ENCODE measurements at regions of chr12 and their contacts with region 1.

Region 1: DNA sequence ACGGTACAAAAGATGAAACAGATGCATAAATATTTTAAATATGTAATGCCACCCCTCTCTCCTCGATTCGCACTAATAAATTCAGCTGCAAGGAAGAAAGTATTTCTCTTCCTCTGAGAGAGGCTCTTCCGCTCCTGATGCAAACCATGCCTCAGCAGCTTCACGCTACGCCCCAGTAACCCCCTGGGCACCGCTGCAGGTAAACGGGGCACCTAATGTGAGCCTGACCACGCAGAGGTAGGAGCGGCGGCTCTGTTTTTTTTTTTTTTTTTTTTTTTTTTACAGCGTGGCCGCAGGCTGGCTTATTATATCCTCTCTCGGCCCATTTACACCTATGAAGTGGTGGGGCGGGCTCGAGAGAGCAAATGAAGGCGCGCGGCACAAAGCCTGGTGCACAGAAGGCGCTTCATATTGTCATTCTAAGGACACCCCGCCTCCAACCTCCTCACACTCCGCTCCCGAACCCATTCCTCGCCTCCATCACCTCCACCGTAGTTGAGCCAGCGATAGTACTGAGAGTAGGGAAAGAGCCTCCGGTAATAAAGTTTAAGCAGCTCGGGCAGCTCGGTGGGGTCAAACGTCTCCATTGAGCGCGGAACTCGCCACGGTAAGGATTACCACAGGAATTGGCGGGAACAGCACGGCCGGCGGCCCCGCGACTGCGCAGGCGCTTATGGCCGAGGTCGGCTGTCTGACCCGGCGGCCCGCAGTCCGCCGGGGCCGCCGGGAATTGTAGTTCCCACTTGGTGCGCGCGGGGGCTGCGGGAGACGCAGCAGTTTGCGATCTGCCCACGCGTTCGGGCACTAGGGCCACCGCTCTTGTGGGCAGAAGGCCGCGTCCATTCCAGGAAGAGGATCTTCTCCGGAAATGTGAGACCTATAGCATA is at the start of gene PRIM1:
- DNase-seq: peak; percentile 85
- H3K4me3 Mint-ChIP-seq: peak within 1 kb of the TSS; percentile 99
- H3K27ac Mint-ChIP-seq: peak within 1 kb of the TSS; percentile 99
- H3K4me1 Mint-ChIP-seq: peaks cover 45% of the 10 kb centered on the region
- H3K27me3 Mint-ChIP-seq: no peaks in the 10 kb centered on the region
- total RNA-seq, gene PRIM1: 67.5 and 67.8 TPM in 2 replicates

Region 2: GRCh38 chr12:56724972-56725722 is 26.8 kb before region 1 on chr12 and contains the start of gene NACA:
- intact Hi-C with region 1: loop called (anchors 1 kb)
- DNase-seq: peak; percentile 98
- H3K4me3 Mint-ChIP-seq: peak within 1 kb of the TSS; percentile 91
- H3K27ac Mint-ChIP-seq: peak within 1 kb of the TSS; percentile 91
- H3K4me1 Mint-ChIP-seq: peaks cover 48% of the 10 kb centered on the region
- H3K27me3 Mint-ChIP-seq: peaks cover 1% of the 10 kb centered on the region
- total RNA-seq, gene NACA: 942 and 963 TPM in 2 replicates

Region 3: GRCh38 chr12:56987551-56988053 is 235.6 kb after region 1 on chr12:
- intact Hi-C with region 1: loop called (anchors 1 kb)
- DNase-seq: peak; percentile 54
- H3K4me3 Mint-ChIP-seq: no peak overlapping the region
- H3K27ac Mint-ChIP-seq: no peak overlapping the region
- H3K4me1 Mint-ChIP-seq: peaks cover 23% of the 10 kb centered on the region
- H3K27me3 Mint-ChIP-seq: peaks cover 3% of the 10 kb centered on the region

Region 4: GRCh38 chr12:57063991-57064685 is 312.2 kb after region 1 on chr12:
- intact Hi-C with region 1: loop called (anchors 1 kb)
- DNase-seq: peak; percentile 57
- H3K4me3 Mint-ChIP-seq: peak overlapping the region; percentile 82
- H3K27ac Mint-ChIP-seq: peak overlapping the region; percentile 94
- H3K4me1 Mint-ChIP-seq: peaks cover 54% of the 10 kb centered on the region
- H3K27me3 Mint-ChIP-seq: no peaks in the 10 kb centered on the region

Region 5: DNA sequence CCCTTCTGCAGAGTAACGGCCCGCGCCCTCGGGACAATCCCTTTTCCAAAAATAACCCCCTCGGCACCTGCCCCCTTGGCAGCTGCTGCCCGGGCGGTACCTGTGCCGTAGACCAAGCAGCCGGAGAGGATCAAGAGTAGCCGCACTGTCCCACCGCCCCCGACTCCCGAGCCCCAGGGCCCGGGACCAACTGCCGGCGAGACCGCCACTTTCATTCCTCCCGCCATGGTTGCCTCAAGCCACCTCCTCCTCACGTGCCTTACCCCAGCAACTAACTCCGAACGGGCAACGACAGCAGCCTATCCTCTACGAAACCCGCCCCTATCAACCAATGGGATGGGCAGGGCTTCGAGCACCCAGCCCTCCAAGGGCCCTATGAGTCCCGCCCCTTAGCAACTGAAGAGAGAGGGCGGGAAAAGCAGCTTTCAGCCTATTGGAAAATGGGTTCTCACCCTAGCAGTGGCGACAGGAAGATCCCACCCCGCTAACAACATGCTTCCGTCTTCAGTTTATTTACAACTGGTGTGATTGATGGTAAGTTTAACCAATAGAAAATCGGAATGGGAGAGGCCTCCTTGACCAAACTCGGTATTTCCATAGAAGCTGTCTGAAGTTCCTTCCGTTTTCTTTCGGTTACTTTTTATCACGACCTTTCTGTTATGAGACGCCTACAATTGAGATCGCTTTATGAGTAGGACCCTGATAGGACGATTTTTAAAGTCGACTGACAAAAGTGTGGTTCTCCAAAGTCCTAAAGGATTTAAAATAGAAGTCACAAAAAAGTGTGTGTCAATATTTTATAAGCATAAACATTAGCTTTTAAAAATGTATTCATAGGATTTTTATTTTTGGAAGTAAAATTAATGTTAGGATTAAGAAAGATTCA is 326.8 kb after region 1 on chr12 and contains the start of gene NEMP1:
- intact Hi-C with region 1: loop called (anchors 1 kb)
- DNase-seq: peak; percentile 97
- H3K4me3 Mint-ChIP-seq: peak within 1 kb of the TSS; percentile 89
- H3K27ac Mint-ChIP-seq: peak within 1 kb of the TSS; percentile 92
- H3K4me1 Mint-ChIP-seq: peaks cover 16% of the 10 kb centered on the region
- H3K27me3 Mint-ChIP-seq: no peaks in the 10 kb centered on the region
- total RNA-seq, gene NEMP1: 70.2 and 71.7 TPM in 2 replicates

Region 6: DNA sequence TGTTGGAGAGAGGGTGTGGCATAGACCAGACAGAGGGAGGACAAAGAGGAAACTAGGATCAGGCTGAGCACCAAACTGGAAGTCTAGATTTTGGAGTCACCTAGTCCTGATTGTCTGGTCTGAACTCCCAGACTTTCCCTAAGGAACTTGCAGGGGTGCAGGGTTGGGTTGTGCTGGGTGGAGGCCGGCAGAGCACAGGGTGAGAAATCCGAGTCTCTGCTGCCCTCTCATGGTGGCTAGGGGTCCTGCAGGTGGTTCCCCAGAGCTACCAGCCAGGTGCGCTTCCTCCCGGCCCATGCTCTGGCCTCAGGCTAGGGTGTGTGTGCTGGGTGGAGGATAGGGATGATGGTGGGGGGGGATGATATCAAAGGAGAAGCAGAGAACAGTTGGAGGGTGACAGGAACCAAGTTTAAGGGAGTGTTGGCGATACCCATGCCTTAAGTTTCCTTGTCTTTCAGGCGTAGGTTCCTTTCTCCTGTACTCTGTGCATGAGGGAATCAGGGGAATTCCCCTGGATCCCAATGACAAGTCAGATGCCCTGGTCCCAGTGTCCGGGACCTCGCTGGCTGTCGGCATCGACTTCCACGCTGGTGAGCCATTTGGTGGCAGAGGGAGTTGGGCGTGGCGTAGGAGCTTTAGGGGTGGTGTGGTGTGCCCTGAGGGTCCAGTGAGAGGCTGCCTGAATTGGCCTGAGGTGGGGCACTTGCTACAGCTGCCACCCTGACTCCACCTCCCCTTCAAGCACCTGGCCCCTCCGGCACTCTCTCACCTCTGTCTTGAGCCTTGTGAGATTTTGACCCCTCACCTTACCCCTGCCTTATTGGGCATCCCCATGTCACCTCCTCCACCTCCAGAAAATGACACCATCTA is 431.2 kb after region 1 on chr12:
- intact Hi-C with region 1: loop called (anchors 1 kb)
- DNase-seq: peak; percentile 65
- H3K4me3 Mint-ChIP-seq: no peak overlapping the region
- H3K27ac Mint-ChIP-seq: peak overlapping the region; percentile 34
- H3K4me1 Mint-ChIP-seq: peaks cover 6% of the 10 kb centered on the region
- H3K27me3 Mint-ChIP-seq: peaks cover 6% of the 10 kb centered on the region